ENCODE measurements at regions of chr1 and their contacts with region 1.

Region 1: GRCh38 chr1:32521165-32521564 is 18.1 kb upstream of the ZBTB8A start:
- DNase-seq: no peak
- ATAC-seq: no peak
- H3K4me3 ChIP-seq: no peak overlapping the region
- H3K4me3 Mint-ChIP-seq: peak overlapping the region; percentile 61 to 69 (median 65)
- H3K27ac ChIP-seq: no peak overlapping the region
- H3K27ac Mint-ChIP-seq: no peak overlapping the region
- H3K4me1 ChIP-seq: peaks cover 0 to 9% of the 10 kb centered on the region in 2 experiments
- H3K4me1 Mint-ChIP-seq: peaks cover 0 to 4% (median 2%) of the 10 kb centered on the region in 3 donors
- H3K27me3 ChIP-seq: peaks cover 0 to 17% of the 10 kb centered on the region in 2 experiments
- H3K27me3 Mint-ChIP-seq: peaks cover 2 to 5% of the 10 kb centered on the region in 2 donors

Region 2: GRCh38 chr1:32321712-32322291 is 199.4 kb before region 1 on chr1:
- CTCF ChIA-PET with region 1: no interaction called
- POLR2A ChIA-PET with region 1: interaction called in 1 of 2 experiments, 12 read pairs
- DNase-seq: peak in 23 of 35 experiments; percentile 8 to 68 (median 29)
- ATAC-seq: peak; percentile 86 to 90 (median 88)
- H3K4me3 ChIP-seq: peak overlapping the region; percentile 10 to 46
- H3K4me3 Mint-ChIP-seq: peak overlapping the region; percentile 64 to 78 (median 67)
- H3K27ac ChIP-seq: peak overlapping the region; percentile 61
- H3K27ac Mint-ChIP-seq: peak overlapping the region; percentile 96
- H3K4me1 ChIP-seq: peaks cover 29 to 58% of the 10 kb centered on the region in 2 experiments
- H3K4me1 Mint-ChIP-seq: peaks cover 44 to 59% (median 44%) of the 10 kb centered on the region in 3 donors
- H3K27me3 ChIP-seq: no peaks in the 10 kb centered on the region
- H3K27me3 Mint-ChIP-seq: no peaks in the 10 kb centered on the region

Region 3: DNA sequence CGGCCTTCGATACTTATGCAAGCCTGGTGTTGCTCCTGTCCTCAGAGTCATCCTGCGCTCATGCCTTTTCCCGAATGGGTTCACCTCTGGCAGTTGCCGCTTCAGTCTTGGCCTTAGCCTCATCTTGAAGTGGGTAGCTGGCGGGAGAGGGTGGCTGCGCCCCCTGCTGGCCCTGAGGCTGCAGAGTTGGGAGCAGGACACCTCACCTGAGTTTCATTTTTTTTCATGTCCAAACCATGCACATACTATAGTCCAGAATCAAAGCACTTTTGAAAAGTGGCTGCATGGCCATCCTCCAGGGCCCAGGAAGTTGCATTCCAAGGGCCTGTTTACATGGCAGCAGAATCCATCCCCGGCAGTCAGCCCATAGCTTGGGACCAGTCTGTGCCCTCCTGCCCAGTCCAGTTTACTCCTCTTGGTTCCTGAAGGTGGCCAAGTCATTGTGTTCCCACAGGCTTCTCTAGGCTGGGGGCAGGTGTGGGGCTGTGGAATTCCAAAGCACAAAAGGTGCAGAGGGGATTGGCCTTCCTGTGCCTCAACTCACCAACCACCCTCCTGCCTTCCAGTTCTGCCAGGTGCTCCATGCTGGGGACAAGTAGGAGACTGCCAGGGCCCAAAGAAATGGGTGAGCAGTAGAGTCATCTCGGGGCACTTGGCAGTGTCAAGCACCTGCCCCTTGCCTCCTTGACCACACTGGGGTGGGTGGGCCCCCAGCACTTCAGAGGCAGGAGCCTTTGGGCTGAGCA is 252.0 kb after region 1 on chr1:
- CTCF ChIA-PET with region 1: interaction called in 1 of 2 experiments, 14 read pairs
- POLR2A ChIA-PET with region 1: no interaction called
- DNase-seq: peak; percentile 42 to 85 (median 66)
- ATAC-seq: peak; percentile 70 to 86 (median 81)
- H3K4me3 ChIP-seq: no peak overlapping the region
- H3K4me3 Mint-ChIP-seq: no peak overlapping the region
- H3K27ac ChIP-seq: no peak overlapping the region
- H3K27ac Mint-ChIP-seq: peak overlapping the region; percentile 58 to 62
- H3K4me1 ChIP-seq: peaks cover 0 to 9% of the 10 kb centered on the region in 2 experiments
- H3K4me1 Mint-ChIP-seq: peaks cover 5 to 14% (median 13%) of the 10 kb centered on the region in 3 donors
- H3K27me3 ChIP-seq: peaks cover 0 to 6% of the 10 kb centered on the region in 2 experiments
- H3K27me3 Mint-ChIP-seq: no peaks in the 10 kb centered on the region